ENCODE measurements at regions of chr1 and their contacts with region 1.

Region 1: GRCh38 chr1:113991467-113991997 is 12.3 kb downstream of the OLFML3 start:
- DNase-seq: no peak
- ATAC-seq: peak; percentile 76 to 91 (median 88)
- H3K4me3 ChIP-seq: no peak overlapping the region
- H3K27ac ChIP-seq: peak overlapping the region; percentile 93
- H3K4me1 ChIP-seq: peaks cover 18% of the 10 kb centered on the region
- H3K27me3 ChIP-seq: no peaks in the 10 kb centered on the region
- CTCF ChIP-seq: no peak

Region 2: GRCh38 chr1:113903501-113904294 is 87.8 kb before region 1 on chr1:
- intact Hi-C with region 1: no loop called
- DNase-seq: no peak
- ATAC-seq: no peak
- H3K4me3 ChIP-seq: peak overlapping the region; percentile 91
- H3K27ac ChIP-seq: peak overlapping the region; percentile 89
- H3K4me1 ChIP-seq: peaks cover 9% of the 10 kb centered on the region
- H3K27me3 ChIP-seq: no peaks in the 10 kb centered on the region
- CTCF ChIP-seq: no peak

Region 3: DNA sequence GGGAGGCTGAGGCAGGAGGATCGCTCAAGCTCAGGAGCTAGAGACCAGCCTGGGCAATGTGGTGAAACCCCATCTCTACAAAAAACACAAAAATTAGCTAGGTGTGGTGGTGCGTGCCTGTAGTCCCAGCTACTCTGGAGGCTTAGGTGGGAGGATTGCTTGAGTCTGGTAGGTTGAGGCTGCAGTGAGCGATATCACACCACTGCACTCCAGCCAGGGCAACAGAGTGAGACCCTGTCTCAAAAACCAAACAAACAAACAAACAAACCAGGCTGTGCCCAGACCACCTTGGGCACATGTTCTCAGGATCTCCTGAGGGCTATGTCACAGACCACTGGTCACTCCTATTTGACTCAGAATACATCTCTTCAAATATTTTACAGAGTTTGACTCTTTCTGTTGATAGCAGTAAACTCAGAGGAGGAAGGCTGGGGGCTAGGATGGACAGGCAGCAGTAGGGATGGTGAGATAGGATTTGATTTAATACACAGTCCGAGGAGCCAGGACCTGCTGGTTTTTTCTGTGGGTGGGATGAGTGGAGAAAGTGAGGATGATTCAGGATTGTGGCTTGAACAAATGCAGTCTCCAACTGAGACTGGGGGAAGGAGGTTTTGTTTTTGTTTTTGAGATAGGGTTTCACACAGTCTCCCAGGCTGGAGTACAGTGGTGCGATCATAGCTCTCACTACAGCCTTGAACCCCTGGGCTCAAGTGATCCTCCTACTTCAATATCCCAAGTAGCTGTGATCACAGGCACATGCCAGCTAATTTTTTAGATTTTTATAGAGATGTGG is 34.3 kb after region 1 on chr1:
- intact Hi-C with region 1: loop called in 1 of 2 experiments (anchors 2 kb)
- DNase-seq: no peak
- ATAC-seq: peak; percentile 24 to 60 (median 48)
- H3K4me3 ChIP-seq: no peak overlapping the region
- H3K27ac ChIP-seq: peak overlapping the region; percentile 86
- H3K4me1 ChIP-seq: peaks cover 54% of the 10 kb centered on the region
- H3K27me3 ChIP-seq: no peaks in the 10 kb centered on the region
- CTCF ChIP-seq: no peak

Region 4: DNA sequence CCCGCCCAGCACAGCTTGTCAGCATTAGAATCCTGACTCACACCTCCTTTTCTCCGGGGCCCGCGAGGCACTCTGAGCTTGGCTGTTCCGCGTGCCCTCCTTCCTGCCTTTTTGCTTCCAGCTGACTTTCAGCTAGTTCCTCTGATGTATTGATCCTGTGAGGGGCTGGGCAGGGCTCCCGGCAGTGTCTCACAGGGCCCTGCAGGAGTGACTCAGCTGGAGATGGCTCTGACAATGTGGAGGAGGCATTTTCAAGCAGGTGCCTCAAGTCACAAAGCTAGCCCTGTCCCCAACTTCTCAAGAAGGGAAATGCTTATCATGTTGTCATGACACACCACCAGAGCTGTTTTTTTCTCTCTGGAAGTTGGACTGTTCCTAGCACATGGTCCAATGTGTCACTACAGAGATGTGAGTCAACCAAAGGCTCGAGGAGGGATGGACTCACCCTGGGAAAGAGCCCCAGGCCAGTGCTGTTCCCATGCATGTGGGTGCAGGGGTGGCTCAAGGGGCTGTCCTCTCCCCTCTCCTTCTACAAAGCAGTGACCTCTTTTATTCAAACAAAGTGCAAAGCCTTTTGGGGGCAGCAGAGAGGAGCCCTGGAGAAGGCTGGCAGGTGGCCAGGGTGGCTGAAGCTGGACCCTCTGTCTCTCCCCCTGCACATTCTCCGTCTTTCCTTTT is 131.5 kb after region 1 on chr1:
- intact Hi-C with region 1: no loop called
- DNase-seq: no peak
- ATAC-seq: peak in 2 of 4 donors; percentile 27 to 48
- H3K4me3 ChIP-seq: no peak overlapping the region
- H3K27ac ChIP-seq: no peak overlapping the region
- H3K4me1 ChIP-seq: no peaks in the 10 kb centered on the region
- H3K27me3 ChIP-seq: no peaks in the 10 kb centered on the region
- CTCF ChIP-seq: no peak

Measured in psoas muscle (tissue), 8 donors.